ENCODE measurements at regions of chr22 and their contacts with region 1.

Region 1: DNA sequence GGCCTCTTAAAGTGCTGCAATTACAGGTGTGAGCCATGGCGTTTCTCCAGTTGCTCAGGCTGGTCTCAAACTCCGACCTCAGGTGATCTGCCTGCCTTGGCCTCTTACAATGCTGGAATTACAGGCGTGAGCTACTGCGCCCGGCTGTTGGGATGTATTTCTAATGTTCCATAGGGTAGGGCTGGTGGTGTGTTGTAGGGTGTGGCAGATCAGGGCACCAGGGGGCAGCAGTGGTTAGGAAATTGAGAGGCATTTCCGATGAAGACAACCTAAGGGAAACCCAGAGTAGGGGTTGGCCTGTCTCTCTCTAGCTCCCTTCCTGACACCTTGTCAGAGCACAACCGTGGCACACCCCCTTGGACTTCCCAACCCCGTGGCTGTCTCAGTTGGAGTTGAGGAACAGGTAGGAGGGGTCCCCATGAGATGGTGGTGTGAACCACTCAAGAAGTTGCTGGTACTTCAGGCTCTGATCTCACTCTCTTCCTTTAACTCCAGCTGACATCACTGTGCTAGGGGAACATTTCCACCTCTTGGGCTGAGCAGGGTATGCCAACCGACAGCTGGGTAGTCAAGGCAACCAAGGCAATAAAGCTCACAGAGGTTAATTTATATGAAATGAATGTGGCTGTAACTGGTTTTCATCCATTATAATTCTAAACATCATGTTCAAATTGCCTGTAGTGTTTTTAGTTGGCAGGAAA is 33.0 kb downstream of the YWHAH start:
- DNase-seq: peak; percentile 62
- ATAC-seq: peak; percentile 93
- H3K4me3 Mint-ChIP-seq: no peak overlapping the region
- H3K27ac Mint-ChIP-seq: no peak overlapping the region
- H3K4me1 Mint-ChIP-seq: peaks cover 12% of the 10 kb centered on the region
- H3K27me3 Mint-ChIP-seq: no peaks in the 10 kb centered on the region
- CTCF ChIP-seq: no peak

Region 2: GRCh38 chr22:32005453-32005852 is 28.2 kb after region 1 on chr22:
- CTCF ChIA-PET with region 1: no interaction called
- POLR2A ChIA-PET with region 1: no interaction called
- intact Hi-C with region 1: no loop called
- DNase-seq: no peak
- ATAC-seq: no peak
- H3K4me3 Mint-ChIP-seq: no peak overlapping the region
- H3K27ac Mint-ChIP-seq: no peak overlapping the region
- H3K4me1 Mint-ChIP-seq: no peaks in the 10 kb centered on the region
- H3K27me3 Mint-ChIP-seq: peaks cover 21% of the 10 kb centered on the region
- CTCF ChIP-seq: no peak

Region 3: DNA sequence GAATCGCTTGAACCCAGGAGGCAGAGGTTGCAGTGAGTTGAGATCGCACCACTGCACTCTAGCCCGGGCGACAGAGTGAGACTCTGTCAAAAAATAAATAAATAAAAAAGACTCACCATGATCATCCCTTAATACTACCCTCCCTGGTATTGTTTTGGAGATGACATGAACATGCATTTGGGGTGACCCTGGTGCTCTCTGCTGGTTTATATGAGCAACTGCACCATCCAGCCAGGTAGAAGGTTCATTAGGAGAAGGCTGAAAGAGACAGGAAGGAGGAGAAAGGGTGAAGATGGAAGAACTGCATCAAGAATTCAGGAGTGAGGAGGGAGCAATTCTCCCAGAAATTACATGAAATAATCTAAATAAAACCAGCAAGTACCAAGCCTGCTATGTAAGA is 103.6 kb after region 1 on chr22:
- CTCF ChIA-PET with region 1: interaction called, 7 read pairs
- POLR2A ChIA-PET with region 1: no interaction called
- intact Hi-C with region 1: loop called (anchors 1 kb)
- DNase-seq: no peak
- ATAC-seq: peak; percentile 62
- H3K4me3 Mint-ChIP-seq: no peak overlapping the region
- H3K27ac Mint-ChIP-seq: no peak overlapping the region
- H3K4me1 Mint-ChIP-seq: no peaks in the 10 kb centered on the region
- H3K27me3 Mint-ChIP-seq: peaks cover 4% of the 10 kb centered on the region
- CTCF ChIP-seq: no peak

Region 4: DNA sequence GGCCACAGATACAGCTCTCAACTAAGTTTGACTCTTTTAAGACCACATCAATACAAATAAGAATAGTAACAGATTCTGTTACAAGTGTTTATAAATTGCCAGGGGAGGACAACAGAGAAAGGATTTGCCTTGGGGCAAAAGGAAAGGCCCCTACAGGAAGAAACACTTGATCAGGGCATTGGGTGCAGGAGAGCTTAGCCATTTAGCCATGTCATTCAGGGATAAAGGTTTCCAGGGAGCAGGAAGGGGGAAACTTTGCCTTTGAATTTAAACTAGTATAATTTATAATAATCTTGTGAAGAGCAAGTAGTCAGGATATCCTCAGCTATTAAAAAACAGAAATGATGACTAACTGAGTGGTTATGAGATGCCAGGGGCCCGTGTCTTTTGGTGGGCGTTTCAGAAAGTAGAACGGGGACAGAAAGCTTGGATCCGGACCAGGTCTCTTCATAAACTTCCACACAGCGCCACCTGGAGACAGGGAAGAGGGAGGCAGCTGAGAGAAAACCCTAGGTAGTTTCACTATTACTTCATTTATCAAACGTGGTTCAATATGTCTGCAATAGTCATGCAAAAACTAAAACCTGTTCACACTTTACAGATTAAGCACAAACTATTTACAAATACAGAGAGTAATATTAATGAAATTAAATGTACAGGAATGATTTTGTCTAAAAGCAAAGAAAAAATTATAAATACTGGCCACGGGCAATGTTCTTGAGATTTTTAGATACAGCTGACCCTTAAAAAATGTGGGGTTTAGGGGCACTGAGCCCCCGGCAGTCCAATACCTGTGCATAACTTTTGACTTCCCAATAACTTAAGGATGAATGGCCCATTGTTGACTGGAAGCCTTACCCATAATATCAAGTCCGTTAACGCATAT is 288.8 kb after region 1 on chr22:
- CTCF ChIA-PET with region 1: interaction called, 11 read pairs
- POLR2A ChIA-PET with region 1: no interaction called
- intact Hi-C with region 1: loop called (anchors 2 kb)
- DNase-seq: no peak
- ATAC-seq: peak; percentile 42
- H3K4me3 Mint-ChIP-seq: no peak overlapping the region
- H3K27ac Mint-ChIP-seq: no peak overlapping the region
- H3K4me1 Mint-ChIP-seq: no peaks in the 10 kb centered on the region
- H3K27me3 Mint-ChIP-seq: peaks cover 4% of the 10 kb centered on the region
- CTCF ChIP-seq: no peak

Region 5: DNA sequence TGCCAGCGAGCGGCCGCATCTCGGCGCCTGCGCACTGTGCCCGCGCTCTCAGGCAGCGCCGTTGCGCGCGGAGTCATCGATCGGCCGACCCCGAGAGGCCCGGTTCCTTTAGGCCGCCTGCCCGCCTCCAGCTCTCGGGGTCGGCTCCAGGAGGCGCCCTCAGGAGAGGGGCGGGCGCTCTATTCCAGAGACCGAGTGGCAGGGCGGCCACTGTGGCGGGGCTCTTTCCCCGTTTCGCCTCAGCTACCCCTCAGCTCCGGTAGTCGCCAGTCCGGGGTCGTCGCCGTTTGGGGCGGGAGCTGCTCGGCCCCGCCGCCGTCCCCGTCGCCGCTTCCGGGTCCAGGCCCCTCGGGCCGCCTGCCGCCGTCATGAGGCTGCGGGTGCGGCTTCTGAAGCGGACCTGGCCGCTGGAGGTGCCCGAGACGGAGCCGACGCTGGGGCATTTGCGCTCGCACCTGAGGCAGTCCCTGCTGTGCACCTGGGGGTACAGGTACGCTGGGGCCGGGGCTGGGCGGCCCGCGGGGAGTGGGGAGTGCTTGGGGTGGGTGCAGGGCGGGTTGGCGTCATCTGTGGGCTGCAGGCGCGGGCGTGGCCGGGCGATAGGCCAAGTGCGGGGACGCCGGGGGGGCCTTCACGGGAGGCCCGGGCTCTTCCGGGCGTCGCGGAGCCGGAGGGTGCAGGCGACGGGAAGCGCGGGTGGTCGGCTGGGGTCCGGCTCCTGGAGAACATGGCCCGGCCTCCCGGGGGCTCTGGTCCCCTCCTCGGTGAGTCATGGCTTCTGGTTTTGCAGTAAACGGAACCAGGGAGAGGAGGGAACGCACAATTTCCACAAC is 497.6 kb after region 1 on chr22 and contains the start of gene FBXO7:
- CTCF ChIA-PET with region 1: interaction called, 16 read pairs
- POLR2A ChIA-PET with region 1: interaction called, 3 read pairs
- intact Hi-C with region 1: loop called (anchors 1 kb)
- DNase-seq: peak; percentile 92
- ATAC-seq: peak; percentile 84
- H3K4me3 Mint-ChIP-seq: peak within 1 kb of the TSS; percentile 95
- H3K27ac Mint-ChIP-seq: peak within 1 kb of the TSS; percentile 91
- H3K4me1 Mint-ChIP-seq: peaks cover 30% of the 10 kb centered on the region
- H3K27me3 Mint-ChIP-seq: no peaks in the 10 kb centered on the region
- CTCF ChIP-seq: no peak
- total RNA-seq, gene FBXO7: 85.4 and 97.2 TPM in 2 replicates

Region 6: DNA sequence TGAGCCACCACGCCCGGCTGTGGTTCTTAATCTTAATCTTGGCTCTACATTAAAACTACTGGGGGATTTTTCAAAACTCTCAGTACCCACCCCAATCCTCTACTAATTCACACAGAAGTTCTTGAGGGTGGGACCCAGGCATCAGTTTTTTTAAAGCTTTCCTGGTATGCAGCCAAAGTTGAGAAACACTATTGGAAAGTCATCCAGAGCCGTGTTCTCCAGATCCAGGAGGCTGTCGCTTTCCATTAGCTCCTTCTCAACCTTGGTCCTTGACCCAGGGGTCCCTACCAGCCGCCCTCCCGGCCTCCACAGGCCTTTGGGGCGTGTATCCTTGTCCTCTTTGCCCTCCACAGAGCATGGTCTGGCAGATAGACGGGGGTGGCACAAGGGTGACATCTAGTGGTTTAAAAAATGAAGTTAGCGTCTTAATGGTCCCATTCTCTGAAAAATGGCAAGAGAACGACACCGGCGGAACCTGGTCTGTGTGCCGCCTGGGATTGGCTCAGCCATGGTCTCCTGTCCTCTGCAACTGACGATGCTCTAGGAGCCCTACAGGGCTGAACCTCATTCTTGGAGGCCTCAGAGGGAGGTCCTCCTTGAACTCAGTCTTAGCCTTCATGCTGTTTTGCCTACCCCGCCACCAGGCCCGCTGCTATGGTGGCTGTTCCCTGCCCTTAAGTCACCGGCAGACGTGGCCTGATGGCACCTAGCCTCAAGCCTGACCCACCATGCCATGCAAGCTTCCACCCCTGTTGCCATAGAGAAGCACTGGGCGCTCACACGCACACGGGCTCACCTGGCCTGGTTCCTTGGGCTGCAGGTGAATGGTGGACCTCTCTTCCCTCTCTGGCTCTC is 1232.9 kb after region 1 on chr22:
- CTCF ChIA-PET with region 1: interaction called, 3 read pairs
- POLR2A ChIA-PET with region 1: no interaction called
- intact Hi-C with region 1: loop called (anchors 2 kb)
- DNase-seq: peak; percentile 24
- ATAC-seq: peak; percentile 78
- H3K4me3 Mint-ChIP-seq: no peak overlapping the region
- H3K27ac Mint-ChIP-seq: no peak overlapping the region
- H3K4me1 Mint-ChIP-seq: peaks cover 14% of the 10 kb centered on the region
- H3K27me3 Mint-ChIP-seq: no peaks in the 10 kb centered on the region
- CTCF ChIP-seq: peak; percentile 74